Activated CD4-positive, alpha-beta memory T cell treated with anti-CD3 and anti-CD28 coated beads for 36 hours (primary cell): ENCODE measurements at regions of chr6 and their contacts with region 1.

Region 1: GRCh38 chr6:144215932-144216667 is 65.8 kb downstream of the STX11 start:
- DNase-seq: peak; percentile 95
- H3K4me3 Mint-ChIP-seq: peak overlapping the region; percentile 85
- H3K27ac Mint-ChIP-seq: peak overlapping the region; percentile 93
- H3K4me1 Mint-ChIP-seq: peaks cover 37% of the 10 kb centered on the region
- H3K27me3 Mint-ChIP-seq: peaks cover 4% of the 10 kb centered on the region

Region 2: GRCh38 chr6:143575440-143575839 is 640.7 kb before region 1 on chr6:
- CTCF ChIA-PET with region 1: interaction called, 3 read pairs
- POLR2A ChIA-PET with region 1: no interaction called
- intact Hi-C with region 1: loop called (anchors 10 kb)
- DNase-seq: peak; percentile 56
- H3K4me3 Mint-ChIP-seq: no peak overlapping the region
- H3K27ac Mint-ChIP-seq: no peak overlapping the region
- H3K4me1 Mint-ChIP-seq: peaks cover 10% of the 10 kb centered on the region
- H3K27me3 Mint-ChIP-seq: no peaks in the 10 kb centered on the region

Region 3: GRCh38 chr6:144063744-144064401 is 152.2 kb before region 1 on chr6:
- CTCF ChIA-PET with region 1: no interaction called
- POLR2A ChIA-PET with region 1: no interaction called
- intact Hi-C with region 1: loop called (anchors 1 kb)
- DNase-seq: peak; percentile 91
- H3K4me3 Mint-ChIP-seq: peak overlapping the region; percentile 82
- H3K27ac Mint-ChIP-seq: peak overlapping the region; percentile 67
- H3K4me1 Mint-ChIP-seq: peaks cover 43% of the 10 kb centered on the region
- H3K27me3 Mint-ChIP-seq: no peaks in the 10 kb centered on the region

Region 4: GRCh38 chr6:144104898-144105487 is 111.1 kb before region 1 on chr6:
- CTCF ChIA-PET with region 1: interaction called, 81 read pairs
- POLR2A ChIA-PET with region 1: interaction called, 3 read pairs
- intact Hi-C with region 1: loop called (anchors 1 kb)
- DNase-seq: no peak
- H3K4me3 Mint-ChIP-seq: no peak overlapping the region
- H3K27ac Mint-ChIP-seq: peak overlapping the region; percentile 53
- H3K4me1 Mint-ChIP-seq: peaks cover 7% of the 10 kb centered on the region
- H3K27me3 Mint-ChIP-seq: no peaks in the 10 kb centered on the region

Region 5: DNA sequence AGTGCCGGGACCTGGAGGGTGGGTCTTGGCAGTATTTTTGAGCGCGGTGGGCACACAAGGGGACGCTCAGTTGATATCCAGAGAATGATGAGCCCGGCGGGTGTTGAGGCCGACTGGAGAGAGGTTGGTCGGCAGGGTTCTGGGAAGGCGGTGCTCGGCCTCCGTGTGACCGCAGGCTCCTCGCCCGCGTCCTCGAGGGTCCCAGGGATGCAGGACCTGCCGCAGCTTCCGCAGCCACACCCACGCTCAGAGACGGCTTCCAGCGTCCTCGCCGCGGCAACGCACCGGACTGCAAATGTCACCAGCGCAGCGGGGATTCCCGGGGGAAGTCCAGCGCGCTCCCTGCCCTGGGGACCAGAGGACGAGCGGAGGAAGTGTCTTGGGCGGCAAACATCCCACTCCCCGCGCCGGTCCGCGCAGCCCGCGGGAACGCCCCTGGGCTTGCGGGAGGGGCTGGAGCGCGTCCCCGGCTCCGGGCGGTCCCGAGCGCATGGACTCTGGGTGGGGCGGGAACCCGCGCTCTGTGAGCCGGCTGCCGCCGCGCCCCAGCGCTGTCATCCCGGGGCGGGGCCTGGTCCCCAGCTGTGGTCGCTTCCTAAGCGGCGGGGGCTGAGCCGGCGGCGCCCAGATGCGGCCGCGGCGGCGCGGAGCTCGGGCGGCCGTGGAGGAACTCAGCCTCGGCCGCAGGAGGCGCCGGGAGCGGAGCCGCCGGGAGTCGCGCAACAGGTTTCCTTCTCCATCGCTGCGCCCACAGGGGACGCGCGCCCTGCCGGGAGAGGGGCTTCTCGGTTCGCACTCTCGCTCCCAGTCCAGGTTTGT is 66.0 kb before region 1 on chr6 and contains the start of gene STX11:
- CTCF ChIA-PET with region 1: interaction called, 7 read pairs
- POLR2A ChIA-PET with region 1: interaction called, 4 read pairs
- intact Hi-C with region 1: loop called (anchors 1 kb)
- DNase-seq: peak; percentile 88
- H3K4me3 Mint-ChIP-seq: peak within 1 kb of the TSS; percentile 88
- H3K27ac Mint-ChIP-seq: peak within 1 kb of the TSS; percentile 98
- H3K4me1 Mint-ChIP-seq: peaks cover 41% of the 10 kb centered on the region
- H3K27me3 Mint-ChIP-seq: no peaks in the 10 kb centered on the region
- total RNA-seq, gene STX11: 16.0 to 16.6 TPM

Region 6: DNA sequence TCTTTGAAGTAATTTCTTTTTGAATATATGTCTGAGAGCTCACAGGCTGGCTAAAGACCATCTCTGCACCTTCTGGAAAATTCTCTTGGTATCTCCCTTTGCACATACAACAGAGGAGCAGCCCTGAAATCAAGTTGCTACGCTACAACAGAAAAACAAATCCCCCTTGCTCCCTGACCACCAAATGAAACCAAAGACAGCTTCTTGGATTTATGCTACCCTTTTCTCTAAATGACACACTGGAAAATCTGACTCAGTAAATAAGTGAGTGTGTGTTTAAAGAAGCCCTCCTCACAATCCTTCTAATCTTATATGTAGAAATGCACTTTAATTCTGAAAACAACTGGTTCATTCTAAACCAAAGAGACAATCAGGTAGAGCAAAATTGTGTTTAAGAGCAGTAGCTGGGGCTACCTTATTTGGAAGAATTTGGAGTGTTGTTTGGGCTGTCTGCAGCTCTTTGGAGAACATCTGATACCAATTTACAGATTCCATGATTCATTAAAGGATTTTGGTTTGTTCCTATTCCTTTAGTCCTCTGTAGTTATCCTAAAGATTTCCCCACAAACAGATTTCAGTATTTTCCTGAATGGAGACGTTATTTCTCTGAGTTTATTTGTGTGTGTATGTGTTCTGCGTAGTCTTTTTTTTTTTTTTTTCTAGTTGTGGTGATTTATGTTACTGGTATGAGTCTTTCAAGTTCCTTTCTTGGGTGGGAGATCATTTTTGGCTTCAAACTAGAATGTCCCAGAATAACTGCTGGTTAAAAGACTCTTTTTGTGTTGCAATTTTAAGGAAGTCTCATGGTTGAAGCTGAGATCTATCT is 32.6 kb after region 1 on chr6:
- CTCF ChIA-PET with region 1: interaction called, 3 read pairs
- POLR2A ChIA-PET with region 1: no interaction called
- intact Hi-C with region 1: loop called (anchors 2 kb)
- DNase-seq: peak; percentile 29
- H3K4me3 Mint-ChIP-seq: peak overlapping the region; percentile 21
- H3K27ac Mint-ChIP-seq: peak overlapping the region; percentile 71
- H3K4me1 Mint-ChIP-seq: peaks cover 18% of the 10 kb centered on the region
- H3K27me3 Mint-ChIP-seq: peaks cover 22% of the 10 kb centered on the region

Region 7: GRCh38 chr6:144482142-144482541 is 266.0 kb after region 1 on chr6:
- CTCF ChIA-PET with region 1: interaction called, 38 read pairs
- POLR2A ChIA-PET with region 1: no interaction called
- intact Hi-C with region 1: loop called (anchors 2 kb)
- DNase-seq: peak; percentile 83
- H3K4me3 Mint-ChIP-seq: no peak overlapping the region
- H3K27ac Mint-ChIP-seq: no peak overlapping the region
- H3K4me1 Mint-ChIP-seq: peaks cover 10% of the 10 kb centered on the region
- H3K27me3 Mint-ChIP-seq: no peaks in the 10 kb centered on the region